GM12878 (cell line): ENCODE measurements at regions of chr9 and their contacts with region 1.

Region 1: DNA sequence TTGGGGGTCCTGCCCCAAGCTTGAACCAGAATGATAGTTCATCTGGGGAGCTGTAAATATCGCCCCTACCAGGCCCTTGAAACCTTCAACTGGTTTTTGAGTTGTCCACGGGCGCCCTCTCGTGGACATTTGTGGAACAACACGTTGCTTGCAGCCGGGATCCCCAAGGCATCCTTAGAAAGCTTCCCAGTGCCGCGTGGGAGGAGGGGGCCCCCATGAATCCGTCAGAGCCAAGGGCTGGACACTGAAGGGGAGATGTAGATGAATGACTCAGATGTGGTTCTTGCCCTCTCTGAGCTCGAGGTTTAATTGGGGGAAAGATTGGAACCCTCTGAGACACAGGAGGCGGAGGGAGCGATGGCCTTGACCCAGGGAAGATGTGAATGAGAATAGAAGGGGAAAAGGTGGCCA is 31.8 kb upstream of the ORM1 start:
- DNase-seq: no peak
- ATAC-seq: peak; percentile 87
- H3K4me3 ChIP-seq: no peak overlapping the region
- H3K27ac ChIP-seq: no peak overlapping the region
- H3K4me1 ChIP-seq: no peaks in the 10 kb centered on the region
- H3K27me3 ChIP-seq: no peaks in the 10 kb centered on the region; a peak in 1 of 4 replicates
- CTCF ChIP-seq: peak; percentile 79 to 89 (median 87)
- EP300 ChIP-seq: no peak
- POLR2A ChIP-seq: no peak
- RAD21 ChIP-seq: peak; percentile 82

Region 2: DNA sequence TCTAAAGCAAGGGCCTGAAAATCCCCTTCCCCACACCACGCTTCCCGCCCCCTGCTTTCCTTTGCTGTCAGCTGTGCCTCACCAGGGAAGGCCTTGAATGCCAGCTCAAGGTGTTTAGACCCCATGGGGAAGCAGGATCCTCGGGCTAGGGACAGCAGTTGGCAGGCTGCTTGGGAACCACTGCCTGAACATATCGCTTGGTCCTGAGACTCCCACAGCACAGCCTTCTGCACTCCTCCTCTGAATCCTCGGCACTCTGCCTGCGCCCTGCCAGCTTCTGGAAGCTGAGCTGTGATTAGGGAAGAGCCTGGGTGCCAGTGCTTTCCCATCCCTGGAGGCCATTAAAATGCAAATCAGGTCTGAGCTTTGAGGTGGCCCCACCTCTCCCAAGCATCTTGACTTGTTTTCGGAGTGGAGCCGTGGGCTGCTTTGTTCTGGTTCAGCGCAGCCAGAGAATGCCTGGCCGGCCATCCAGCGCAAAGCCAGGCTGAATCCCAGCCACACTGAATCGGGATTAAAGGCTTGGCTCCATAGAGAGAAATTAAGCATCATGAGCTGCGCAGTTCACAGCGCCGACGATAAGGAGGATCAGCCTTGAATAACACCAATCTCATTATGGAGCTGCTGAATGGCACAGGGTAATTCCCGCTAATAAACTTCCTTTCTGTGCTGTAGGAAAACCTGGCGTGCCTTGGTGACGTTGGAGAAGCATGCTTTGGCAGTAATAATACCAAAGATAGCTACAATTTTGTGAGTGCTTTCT is 252.9 kb before region 1 on chr9:
- CTCF ChIA-PET with region 1: no interaction called
- POLR2A ChIA-PET with region 1: no interaction called
- RAD21 ChIA-PET with region 1: no interaction called
- SMC1A ChIA-PET with region 1: no interaction called
- in situ Hi-C with region 1: no loop called
- intact Hi-C with region 1: no loop called
- DNase-seq: no peak
- ATAC-seq: no peak
- H3K4me3 ChIP-seq: no peak overlapping the region
- H3K27ac ChIP-seq: no peak overlapping the region
- H3K4me1 ChIP-seq: no peaks in the 10 kb centered on the region
- H3K27me3 ChIP-seq: no peaks in the 10 kb centered on the region
- CTCF ChIP-seq: no peak
- EP300 ChIP-seq: no peak
- POLR2A ChIP-seq: no peak
- RAD21 ChIP-seq: no peak

Region 3: DNA sequence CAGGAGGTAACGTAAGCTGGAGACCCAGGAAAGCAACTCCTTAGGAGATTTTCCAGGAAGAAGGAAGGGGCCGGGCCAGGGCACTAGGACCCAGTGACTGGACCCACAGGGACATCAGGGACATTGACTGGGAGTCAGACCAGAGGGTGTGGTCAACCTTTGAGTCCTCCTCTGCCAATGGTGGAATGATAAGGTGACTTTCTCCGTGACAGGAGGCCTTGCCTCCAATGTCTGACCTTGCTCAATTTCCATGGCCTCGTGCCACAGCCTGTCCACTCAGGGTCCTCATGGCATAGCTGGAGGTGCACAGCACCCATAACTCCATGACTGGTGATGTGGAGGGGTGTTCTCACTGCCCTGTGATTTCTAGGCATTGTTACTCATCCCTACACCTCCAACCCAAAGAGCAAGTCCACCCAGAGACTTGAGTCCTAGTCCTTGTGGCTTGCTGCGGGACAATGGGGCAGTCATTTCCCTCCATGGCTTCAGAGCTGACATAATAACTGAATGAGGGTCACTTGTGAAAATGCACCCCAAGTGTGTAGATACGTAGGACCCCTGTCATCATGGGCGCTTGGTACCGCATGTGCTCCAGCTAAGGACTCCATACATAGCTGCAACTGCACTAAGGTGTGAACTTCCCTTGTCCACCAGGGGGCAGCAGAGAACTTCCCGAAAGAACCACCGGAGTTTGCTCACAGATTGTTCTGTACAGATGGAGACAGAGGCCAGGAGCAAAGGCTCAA is 208.9 kb before region 1 on chr9:
- CTCF ChIA-PET with region 1: interaction called, 61 read pairs
- POLR2A ChIA-PET with region 1: no interaction called
- RAD21 ChIA-PET with region 1: interaction called, 24 read pairs
- SMC1A ChIA-PET with region 1: interaction called, 7 read pairs
- in situ Hi-C with region 1: loop called (anchors 25 kb)
- intact Hi-C with region 1: loop called (anchors 1 kb)
- DNase-seq: peak; percentile 25
- ATAC-seq: peak; percentile 99
- H3K4me3 ChIP-seq: no peak overlapping the region
- H3K27ac ChIP-seq: no peak overlapping the region
- H3K4me1 ChIP-seq: no peaks in the 10 kb centered on the region
- H3K27me3 ChIP-seq: peaks cover 0 to 5% of the 10 kb centered on the region in 2 experiments; a peak in 3 of 4 replicates
- CTCF ChIP-seq: peak; percentile 84 to 93 (median 87)
- EP300 ChIP-seq: no peak
- POLR2A ChIP-seq: no peak
- RAD21 ChIP-seq: peak; percentile 67

Region 4: GRCh38 chr9:114108016-114108833 is 182.8 kb before region 1 on chr9:
- CTCF ChIA-PET with region 1: interaction called, 33 read pairs
- POLR2A ChIA-PET with region 1: interaction called, 3 read pairs
- RAD21 ChIA-PET with region 1: interaction called, 7 read pairs
- SMC1A ChIA-PET with region 1: no interaction called
- in situ Hi-C with region 1: no loop called
- intact Hi-C with region 1: loop called (anchors 1 kb)
- DNase-seq: no peak
- ATAC-seq: peak; percentile 97
- H3K4me3 ChIP-seq: no peak overlapping the region
- H3K27ac ChIP-seq: no peak overlapping the region
- H3K4me1 ChIP-seq: no peaks in the 10 kb centered on the region; the same call in 1 of the 2 replicates
- H3K27me3 ChIP-seq: no peaks in the 10 kb centered on the region; a peak in 1 of 4 replicates
- CTCF ChIP-seq: peak; percentile 75 to 92 (median 88)
- EP300 ChIP-seq: no peak
- POLR2A ChIP-seq: no peak
- RAD21 ChIP-seq: peak; percentile 63

Region 5: DNA sequence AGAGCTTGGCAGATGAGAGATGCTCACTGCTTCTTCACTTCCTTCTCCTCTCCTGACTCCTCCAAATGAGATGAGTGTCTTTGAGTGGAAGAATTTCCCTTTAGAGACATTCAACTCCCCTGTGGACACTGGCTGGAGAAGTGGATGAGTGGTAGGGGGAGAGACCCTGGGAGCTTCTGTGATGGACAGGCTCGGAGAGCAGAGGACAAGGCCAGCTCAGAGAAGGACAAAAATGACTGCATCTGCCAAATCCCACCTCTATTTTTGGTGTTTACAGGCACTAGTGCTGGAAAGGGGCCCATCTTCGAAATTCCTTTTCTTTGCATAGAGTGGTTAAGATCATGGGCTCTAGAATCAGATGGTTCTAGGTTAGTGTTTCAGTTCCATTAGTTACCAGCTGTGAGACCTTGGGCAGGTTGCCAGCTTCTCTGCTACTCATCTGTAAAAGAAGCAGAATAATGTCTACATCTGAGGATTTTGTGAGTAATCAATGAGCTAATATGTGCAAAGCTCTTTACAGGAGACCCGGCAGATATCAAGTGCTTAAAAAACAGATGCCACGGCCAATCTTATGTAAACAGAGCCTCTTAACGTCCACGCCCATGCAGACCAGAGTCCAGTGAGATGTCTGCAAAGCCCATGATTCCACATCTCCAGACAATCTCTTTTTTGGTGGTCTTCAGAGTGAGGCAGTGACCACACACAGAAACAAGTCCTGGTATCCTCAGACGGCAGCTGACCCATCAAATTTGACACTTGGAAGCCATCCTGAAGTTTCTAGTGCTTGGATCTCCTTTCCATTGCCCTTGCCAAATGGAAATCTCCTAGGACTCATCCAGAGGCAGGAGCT is 149.3 kb before region 1 on chr9:
- CTCF ChIA-PET with region 1: interaction called, 19 read pairs
- POLR2A ChIA-PET with region 1: no interaction called
- RAD21 ChIA-PET with region 1: no interaction called
- SMC1A ChIA-PET with region 1: interaction called, 3 read pairs
- in situ Hi-C with region 1: no loop called
- intact Hi-C with region 1: no loop called
- DNase-seq: no peak
- ATAC-seq: no peak
- H3K4me3 ChIP-seq: no peak overlapping the region
- H3K27ac ChIP-seq: no peak overlapping the region
- H3K4me1 ChIP-seq: no peaks in the 10 kb centered on the region
- H3K27me3 ChIP-seq: no peaks in the 10 kb centered on the region; a peak in 1 of 4 replicates
- CTCF ChIP-seq: no peak
- EP300 ChIP-seq: no peak
- POLR2A ChIP-seq: no peak
- RAD21 ChIP-seq: no peak

Region 6: DNA sequence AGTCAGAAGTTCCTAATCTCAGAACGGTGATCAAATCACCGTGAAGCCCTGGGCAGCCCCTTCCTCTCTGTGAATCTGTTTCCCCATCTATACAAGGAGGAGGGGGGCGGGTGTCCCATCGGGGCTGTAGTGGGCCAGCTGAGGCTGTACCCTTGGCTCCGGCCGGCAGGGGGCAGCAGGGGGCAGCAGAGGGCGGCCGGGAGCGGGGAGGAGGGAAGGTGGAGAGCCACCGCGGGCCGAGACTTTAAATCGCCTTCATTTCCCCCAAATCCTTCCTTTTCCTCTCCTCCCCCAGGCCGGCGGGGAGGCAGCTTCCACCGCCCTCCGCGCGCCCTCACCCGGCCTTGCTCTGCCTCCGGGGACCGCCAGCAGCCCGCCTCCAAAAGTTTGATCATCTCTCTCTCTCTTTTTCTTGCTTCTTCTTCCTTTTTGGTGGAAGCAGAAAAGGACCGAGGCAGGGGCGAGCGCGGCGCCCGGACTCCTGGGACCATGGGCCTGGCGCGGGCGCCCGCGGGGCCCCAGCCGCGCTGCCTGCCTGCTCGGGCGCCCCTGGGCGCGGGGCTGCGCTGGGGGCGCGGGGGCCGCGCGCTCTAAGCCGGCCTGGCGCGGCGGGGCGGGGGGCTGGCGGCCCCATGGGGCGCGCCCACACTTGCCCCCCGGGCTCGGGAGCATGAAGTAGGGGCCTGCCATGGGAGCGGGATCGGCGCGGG is 135.7 kb before region 1 on chr9 and contains the start of gene COL27A1:
- CTCF ChIA-PET with region 1: interaction called, 16 read pairs
- POLR2A ChIA-PET with region 1: no interaction called
- RAD21 ChIA-PET with region 1: no interaction called
- SMC1A ChIA-PET with region 1: interaction called, 3 read pairs
- in situ Hi-C with region 1: loop called (anchors 10 kb)
- intact Hi-C with region 1: loop called (anchors 1 kb)
- DNase-seq: no peak
- ATAC-seq: peak; percentile 100
- H3K4me3 ChIP-seq: no peak within 1 kb of the TSS
- H3K27ac ChIP-seq: no peak within 1 kb of the TSS
- H3K4me1 ChIP-seq: no peaks in the 10 kb centered on the region
- H3K27me3 ChIP-seq: peaks cover 10 to 11% of the 10 kb centered on the region in 2 experiments; a peak in 3 of 4 replicates
- CTCF ChIP-seq: peak; percentile 63 to 90 (median 80)
- EP300 ChIP-seq: no peak
- POLR2A ChIP-seq: no peak
- RAD21 ChIP-seq: peak; percentile 58
- polyA plus RNA-seq, gene COL27A1: not detected